ENCODE measurements at regions of chr20 and their contacts with region 1.

Region 1: DNA sequence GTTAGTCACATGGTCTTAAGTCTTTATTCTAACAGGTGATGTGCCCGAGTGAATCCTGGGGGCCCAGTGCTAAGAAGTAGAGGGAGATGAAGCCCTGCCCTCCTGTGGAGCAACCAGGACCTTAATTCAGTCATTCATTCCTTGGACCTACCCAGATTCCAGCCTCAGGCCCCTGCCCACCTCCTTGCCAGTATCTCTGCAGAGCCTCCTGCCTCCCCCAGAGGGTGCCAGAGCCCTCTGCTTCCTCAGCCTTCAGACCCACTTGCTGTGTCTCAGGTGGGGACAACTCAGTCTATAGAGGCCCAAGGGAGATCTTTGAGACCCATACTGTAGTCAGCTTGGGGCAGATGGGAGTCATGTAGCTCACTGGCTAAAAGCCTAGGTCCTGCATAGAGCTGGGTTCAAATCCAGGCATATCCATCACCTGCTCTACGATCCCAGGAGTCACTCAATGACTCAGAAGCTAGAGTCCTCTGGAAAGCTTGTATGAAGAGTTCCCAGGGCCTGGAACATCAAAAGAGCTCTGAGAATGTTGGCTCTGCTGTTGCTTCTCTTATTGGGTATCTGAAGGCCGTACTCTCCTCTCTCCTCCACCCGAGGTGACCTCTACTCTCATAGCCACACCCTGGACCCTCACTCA is 3.9 kb upstream of the SIGLEC1 start:
- DNase-seq: peak; percentile 60
- H3K4me3 ChIP-seq: no peak overlapping the region
- H3K27ac ChIP-seq: no peak overlapping the region
- H3K4me1 ChIP-seq: peaks cover 6% of the 10 kb centered on the region
- H3K27me3 ChIP-seq: peaks cover under 1 to 5% of the 10 kb centered on the region in 2 experiments
- CTCF ChIP-seq: peak; percentile 83 to 88
- POLR2A ChIP-seq: no peak

Region 2: GRCh38 chr20:3218307-3218988 is 497.9 kb before region 1 on chr20:
- CTCF ChIA-PET with region 1: no interaction called
- POLR2A ChIA-PET with region 1: no interaction called
- dilution Hi-C with region 1: no loop called
- intact Hi-C with region 1: no loop called
- DNase-seq: peak; percentile 46
- H3K4me3 ChIP-seq: no peak overlapping the region
- H3K27ac ChIP-seq: no peak overlapping the region
- H3K4me1 ChIP-seq: no peaks in the 10 kb centered on the region
- H3K27me3 ChIP-seq: no peaks in the 10 kb centered on the region
- CTCF ChIP-seq: peak; percentile 93
- POLR2A ChIP-seq: no peak

Region 3: GRCh38 chr20:3679749-3680700 is 36.3 kb before region 1 on chr20:
- CTCF ChIA-PET with region 1: interaction called, 346 read pairs
- POLR2A ChIA-PET with region 1: interaction called, 4 read pairs
- dilution Hi-C with region 1: no loop called
- intact Hi-C with region 1: loop called (anchors 1 kb)
- DNase-seq: no peak
- H3K4me3 ChIP-seq: no peak overlapping the region
- H3K27ac ChIP-seq: no peak overlapping the region
- H3K4me1 ChIP-seq: no peaks in the 10 kb centered on the region
- H3K27me3 ChIP-seq: peaks cover 25 to 33% of the 10 kb centered on the region in 2 experiments
- CTCF ChIP-seq: no peak
- POLR2A ChIP-seq: no peak

Region 4: DNA sequence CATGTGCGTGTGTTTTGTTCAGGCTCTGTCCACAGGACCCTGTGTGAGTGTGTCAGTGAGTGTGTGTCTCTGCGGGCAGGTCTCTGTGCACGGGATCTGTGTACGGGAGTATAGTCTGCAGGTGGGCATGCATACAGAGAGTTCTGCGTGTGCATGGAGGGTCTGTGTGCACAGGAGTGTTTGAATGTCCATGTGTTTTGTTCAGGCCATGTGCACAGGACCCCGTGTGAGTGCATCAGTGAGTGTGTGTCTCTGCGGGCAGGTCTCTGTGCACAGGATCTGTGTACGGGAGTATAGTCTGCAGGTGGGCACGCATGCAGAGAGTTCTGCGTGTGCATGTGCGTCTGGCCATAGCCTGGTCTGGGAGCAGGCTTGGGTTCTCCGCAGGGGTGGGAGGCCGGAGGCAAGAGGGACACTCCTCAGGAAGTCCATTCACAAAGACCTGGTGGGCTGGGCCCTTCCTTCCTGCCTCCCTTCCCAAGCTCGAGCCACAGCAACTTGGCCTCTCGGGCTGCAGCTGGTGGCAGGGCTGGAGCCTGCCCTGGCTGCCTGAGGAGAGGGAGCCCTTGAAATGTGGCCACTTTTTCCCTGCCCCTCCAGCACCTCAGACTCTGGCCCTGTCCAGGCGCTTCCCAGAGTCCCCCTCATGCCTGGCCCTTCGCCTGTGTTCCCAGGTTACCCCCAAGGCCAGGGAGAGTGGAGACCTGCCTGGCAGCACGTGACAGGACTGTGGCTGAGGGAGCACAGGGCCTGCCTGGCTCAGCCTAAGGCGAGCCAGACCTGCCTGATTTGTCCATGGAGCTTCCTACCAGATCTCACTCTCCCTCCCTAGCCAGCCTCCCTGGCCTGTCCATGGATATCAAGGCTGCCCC is 23.0 kb after region 1 on chr20:
- CTCF ChIA-PET with region 1: interaction called, 16 read pairs
- POLR2A ChIA-PET with region 1: no interaction called
- dilution Hi-C with region 1: no loop called
- intact Hi-C with region 1: no loop called
- DNase-seq: peak; percentile 49
- H3K4me3 ChIP-seq: no peak overlapping the region
- H3K27ac ChIP-seq: no peak overlapping the region
- H3K4me1 ChIP-seq: peaks cover 12% of the 10 kb centered on the region
- H3K27me3 ChIP-seq: no peaks in the 10 kb centered on the region
- CTCF ChIP-seq: no peak
- POLR2A ChIP-seq: peak; percentile 61

Region 5: GRCh38 chr20:3753098-3753980 is 37.0 kb after region 1 on chr20:
- CTCF ChIA-PET with region 1: interaction called, 75 read pairs
- POLR2A ChIA-PET with region 1: no interaction called
- dilution Hi-C with region 1: no loop called
- intact Hi-C with region 1: loop called (anchors 1 kb)
- DNase-seq: peak; percentile 66
- H3K4me3 ChIP-seq: no peak overlapping the region
- H3K27ac ChIP-seq: no peak overlapping the region
- H3K4me1 ChIP-seq: no peaks in the 10 kb centered on the region
- H3K27me3 ChIP-seq: no peaks in the 10 kb centered on the region
- CTCF ChIP-seq: peak; percentile 79 to 89
- POLR2A ChIP-seq: peak; percentile 55

Region 6: DNA sequence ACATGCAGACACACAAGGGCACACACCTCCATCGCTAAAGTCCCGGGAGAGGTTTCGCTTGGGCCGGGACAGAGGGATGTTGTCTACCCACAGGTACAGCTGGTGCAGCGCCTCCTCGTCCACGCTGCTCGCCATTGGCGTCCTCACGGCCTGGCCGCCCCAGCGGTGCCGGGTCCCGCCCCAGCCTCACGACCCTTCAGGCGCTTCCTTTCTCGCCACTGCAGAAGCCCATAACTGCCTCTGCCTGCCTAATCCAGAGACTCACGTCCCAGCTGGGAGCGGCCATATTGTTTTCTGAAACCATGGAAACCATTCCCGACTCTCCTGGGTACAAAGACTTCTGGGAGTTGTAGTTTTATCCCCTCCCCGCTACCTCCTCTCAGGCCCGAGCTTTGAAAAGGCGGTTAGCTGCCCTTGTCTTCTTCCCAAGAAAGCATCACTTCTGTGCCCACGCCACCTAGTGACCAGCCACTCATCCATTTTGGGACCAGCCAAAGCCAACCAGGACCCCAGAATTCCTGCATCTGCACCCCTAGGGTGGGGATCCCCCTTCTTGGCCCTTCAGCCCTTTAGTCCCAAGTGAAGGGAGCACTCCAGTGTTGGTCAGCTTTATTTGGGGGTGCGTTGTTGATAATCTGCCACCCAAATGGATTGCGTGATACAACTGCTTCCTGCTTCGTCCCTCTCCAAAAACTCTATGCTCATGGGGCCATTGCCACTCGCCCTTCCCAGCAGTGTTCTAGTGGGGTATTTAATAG is 65.0 kb after region 1 on chr20 and contains the start of gene SPEF1:
- CTCF ChIA-PET with region 1: interaction called, 32 read pairs
- POLR2A ChIA-PET with region 1: no interaction called
- dilution Hi-C with region 1: no loop called
- intact Hi-C with region 1: loop called (anchors 1 kb)
- DNase-seq: peak; percentile 90
- H3K4me3 ChIP-seq: peak within 1 kb of the TSS in 2 of 3 experiments; percentile 3 to 17
- H3K27ac ChIP-seq: no peak within 1 kb of the TSS
- H3K4me1 ChIP-seq: peaks cover 28% of the 10 kb centered on the region
- H3K27me3 ChIP-seq: peaks cover 8 to 19% of the 10 kb centered on the region in 2 experiments
- CTCF ChIP-seq: peak; percentile 42 to 56
- POLR2A ChIP-seq: peak; percentile 68
- total RNA-seq, gene SPEF1: 0.32 and 0.44 TPM in 2 replicates

Region 7: DNA sequence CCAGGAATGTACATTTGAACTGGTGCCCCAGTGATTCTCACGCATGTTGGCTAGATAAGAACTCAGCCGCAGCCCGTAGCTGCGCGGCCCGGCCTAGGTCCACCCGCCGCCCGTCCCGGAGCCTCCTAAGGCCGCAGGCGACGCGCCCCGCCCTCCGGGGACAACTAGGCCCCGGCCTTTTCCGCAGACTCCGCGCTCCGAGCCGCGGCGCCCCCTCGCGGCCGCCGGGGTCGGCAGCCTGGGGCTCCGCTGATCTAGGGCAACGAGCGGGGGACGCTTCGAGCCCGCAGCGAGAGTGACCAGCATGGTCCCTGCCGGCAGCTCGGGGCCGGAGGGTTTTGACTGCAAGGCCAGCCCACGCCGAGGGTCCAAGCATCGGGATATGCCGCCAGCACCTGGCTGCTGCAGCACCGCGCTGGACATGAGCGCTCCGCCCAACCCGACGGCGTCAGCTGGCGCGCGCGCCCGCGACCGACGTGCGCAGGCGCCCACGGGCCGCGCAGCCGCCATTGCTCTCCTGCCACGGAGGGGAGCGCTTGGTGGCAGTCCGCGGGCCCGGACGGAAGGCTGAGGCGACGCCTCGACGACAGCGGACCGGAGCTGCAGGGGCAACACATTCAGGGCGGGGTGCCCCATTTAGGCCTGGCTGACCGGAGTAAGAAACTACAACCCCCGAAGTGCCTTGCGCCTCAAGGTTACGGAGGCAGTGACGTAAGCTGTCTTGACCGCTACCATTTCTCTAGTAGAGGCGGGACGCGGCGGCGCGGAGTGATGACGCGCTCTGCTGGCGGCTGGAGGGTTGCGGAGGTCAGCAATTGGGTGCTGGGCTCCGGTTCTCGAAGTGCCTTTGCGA is 104.0 kb after region 1 on chr20 and contains the start of gene AP5S1:
- CTCF ChIA-PET with region 1: interaction called, 15 read pairs
- POLR2A ChIA-PET with region 1: no interaction called
- dilution Hi-C with region 1: no loop called
- intact Hi-C with region 1: no loop called
- DNase-seq: peak; percentile 96
- H3K4me3 ChIP-seq: peak within 1 kb of the TSS; percentile 50 to 86 (median 55)
- H3K27ac ChIP-seq: peak within 1 kb of the TSS; percentile 84
- H3K4me1 ChIP-seq: peaks cover 7% of the 10 kb centered on the region
- H3K27me3 ChIP-seq: no peaks in the 10 kb centered on the region
- CTCF ChIP-seq: peak; percentile 92 to 100
- POLR2A ChIP-seq: peak; percentile 81
- total RNA-seq, gene AP5S1: 19.2 and 22.0 TPM in 2 replicates

Region 8: GRCh38 chr20:4069751-4070150 is 353.4 kb after region 1 on chr20:
- CTCF ChIA-PET with region 1: interaction called, 13 read pairs
- POLR2A ChIA-PET with region 1: no interaction called
- dilution Hi-C with region 1: no loop called
- intact Hi-C with region 1: no loop called
- DNase-seq: no peak
- H3K4me3 ChIP-seq: no peak overlapping the region
- H3K27ac ChIP-seq: no peak overlapping the region
- H3K4me1 ChIP-seq: peaks cover 28% of the 10 kb centered on the region
- H3K27me3 ChIP-seq: no peaks in the 10 kb centered on the region
- CTCF ChIP-seq: no peak
- POLR2A ChIP-seq: no peak

Region 9: GRCh38 chr20:5400164-5400762 is 1683.9 kb after region 1 on chr20:
- CTCF ChIA-PET with region 1: no interaction called
- POLR2A ChIA-PET with region 1: no interaction called
- dilution Hi-C with region 1: no loop called
- intact Hi-C with region 1: no loop called
- DNase-seq: peak; percentile 15
- H3K4me3 ChIP-seq: no peak overlapping the region
- H3K27ac ChIP-seq: no peak overlapping the region
- H3K4me1 ChIP-seq: no peaks in the 10 kb centered on the region
- H3K27me3 ChIP-seq: no peaks in the 10 kb centered on the region
- CTCF ChIP-seq: no peak
- POLR2A ChIP-seq: no peak

Measured in endothelial cell of umbilical vein (primary cell).